ENCODE measurements at regions of chr14 and their contacts with region 1.

Region 1: GRCh38 chr14:75794615-75795038 is 133.6 kb downstream of the TTLL5 start:
- DNase-seq: no peak
- H3K4me3 ChIP-seq: no peak overlapping the region
- H3K27ac ChIP-seq: no peak overlapping the region
- H3K4me1 ChIP-seq: no peaks in the 10 kb centered on the region
- H3K27me3 ChIP-seq: no peaks in the 10 kb centered on the region
- CTCF ChIP-seq: peak in 1 of 5 experiments; percentile 14
- EP300 ChIP-seq: no peak
- POLR2A ChIP-seq: no peak

Region 2: GRCh38 chr14:75822522-75823141 is 28.0 kb after region 1 on chr14:
- in situ Hi-C with region 1: no loop called
- intact Hi-C with region 1: no loop called
- DNase-seq: no peak
- H3K4me3 ChIP-seq: no peak overlapping the region
- H3K27ac ChIP-seq: peak overlapping the region; percentile 51 to 78 (median 54)
- H3K4me1 ChIP-seq: peaks cover 17 to 50% (median 30%) of the 10 kb centered on the region in 4 donors
- H3K27me3 ChIP-seq: no peaks in the 10 kb centered on the region
- CTCF ChIP-seq: no peak
- EP300 ChIP-seq: no peak
- POLR2A ChIP-seq: no peak

Region 3: DNA sequence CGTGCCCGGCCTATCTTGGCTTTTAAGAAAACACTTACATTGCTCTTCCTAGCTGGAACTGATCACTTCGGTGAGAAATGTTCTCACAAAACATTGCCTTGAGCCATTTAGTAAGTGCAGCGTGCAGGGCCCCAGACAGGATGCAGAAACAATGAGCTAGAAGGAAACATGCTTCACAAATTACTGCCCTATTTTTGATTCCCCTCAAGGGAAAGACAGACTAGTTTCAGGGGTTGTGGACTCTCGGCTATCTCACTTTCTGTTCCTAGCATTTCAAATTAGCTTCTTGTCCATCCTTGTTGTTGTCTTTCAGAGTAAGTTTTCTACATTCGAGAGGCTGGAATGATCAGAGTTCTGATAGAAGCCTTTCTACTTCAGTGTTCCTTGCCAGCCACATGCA is 165.6 kb after region 1 on chr14:
- in situ Hi-C with region 1: loop called in 1 of 4 experiments (anchors 25 kb)
- intact Hi-C with region 1: no loop called
- DNase-seq: no peak
- H3K4me3 ChIP-seq: no peak overlapping the region
- H3K27ac ChIP-seq: no peak overlapping the region
- H3K4me1 ChIP-seq: no peaks in the 10 kb centered on the region
- H3K27me3 ChIP-seq: no peaks in the 10 kb centered on the region
- CTCF ChIP-seq: no peak
- EP300 ChIP-seq: no peak
- POLR2A ChIP-seq: no peak

Region 4: GRCh38 chr14:76456200-76456599 is 661.6 kb after region 1 on chr14:
- in situ Hi-C with region 1: no loop called
- intact Hi-C with region 1: no loop called
- DNase-seq: no peak
- H3K4me3 ChIP-seq: no peak overlapping the region
- H3K27ac ChIP-seq: no peak overlapping the region
- H3K4me1 ChIP-seq: no peaks in the 10 kb centered on the region
- H3K27me3 ChIP-seq: no peaks in the 10 kb centered on the region
- CTCF ChIP-seq: peak; percentile 16 to 40 (median 36)
- EP300 ChIP-seq: no peak
- POLR2A ChIP-seq: no peak

Measured in transverse colon (tissue), 4 donors.